ENCODE measurements at regions of chr12 and their contacts with region 1.

Region 1: DNA sequence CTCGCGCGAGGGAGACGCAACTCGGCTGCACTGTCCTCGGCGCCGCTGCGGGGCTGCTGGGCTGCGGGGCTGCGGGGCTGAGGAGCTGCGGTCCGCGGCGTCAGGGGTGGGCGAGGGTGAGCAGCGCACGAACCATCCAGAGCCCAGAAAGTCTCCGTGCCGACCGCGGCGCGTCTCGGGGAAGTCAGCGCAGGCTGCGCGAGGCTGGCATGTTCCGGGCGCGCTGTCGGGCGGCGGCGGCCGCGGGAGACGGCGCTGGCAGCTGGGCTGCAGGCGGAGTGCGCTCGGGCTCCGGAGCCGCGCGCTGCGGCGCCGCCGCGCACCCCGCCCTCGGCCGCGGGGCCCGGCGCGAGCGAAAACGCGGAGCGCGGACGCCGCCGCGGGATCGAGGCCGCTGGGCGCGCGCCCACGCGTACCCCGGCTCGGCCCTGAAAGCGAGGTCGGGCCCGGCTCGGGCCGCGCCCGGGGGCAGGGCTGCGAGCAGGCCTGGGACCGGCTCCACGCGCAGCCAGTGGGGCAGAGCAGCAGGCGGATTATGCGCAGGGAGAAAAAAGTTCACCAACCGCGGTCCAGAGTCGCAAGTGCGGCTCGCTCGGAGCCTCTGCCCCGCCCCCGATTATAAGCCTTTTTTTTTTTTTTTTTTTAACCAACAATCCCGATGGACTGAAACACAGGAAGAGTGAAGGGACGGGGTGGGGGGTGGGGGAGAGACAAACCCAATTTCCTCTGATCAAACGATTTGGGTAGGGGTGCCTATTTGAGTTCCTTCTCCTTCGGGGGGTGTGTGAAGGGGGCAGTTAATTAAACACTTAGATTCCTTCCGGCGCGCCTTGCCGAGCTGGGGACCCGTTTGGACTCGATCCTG is at the start of gene PRICKLE1:
- DNase-seq: peak; percentile 64
- H3K4me3 ChIP-seq: peak within 1 kb of the TSS; percentile 91 to 97 (median 95)
- H3K27ac ChIP-seq: peak within 1 kb of the TSS; percentile 67
- H3K4me1 ChIP-seq: peaks cover 22% of the 10 kb centered on the region
- H3K27me3 ChIP-seq: no peaks in the 10 kb centered on the region
- CTCF ChIP-seq: no peak
- total RNA-seq, gene PRICKLE1: 18.4 to 43.2 TPM

Region 2: DNA sequence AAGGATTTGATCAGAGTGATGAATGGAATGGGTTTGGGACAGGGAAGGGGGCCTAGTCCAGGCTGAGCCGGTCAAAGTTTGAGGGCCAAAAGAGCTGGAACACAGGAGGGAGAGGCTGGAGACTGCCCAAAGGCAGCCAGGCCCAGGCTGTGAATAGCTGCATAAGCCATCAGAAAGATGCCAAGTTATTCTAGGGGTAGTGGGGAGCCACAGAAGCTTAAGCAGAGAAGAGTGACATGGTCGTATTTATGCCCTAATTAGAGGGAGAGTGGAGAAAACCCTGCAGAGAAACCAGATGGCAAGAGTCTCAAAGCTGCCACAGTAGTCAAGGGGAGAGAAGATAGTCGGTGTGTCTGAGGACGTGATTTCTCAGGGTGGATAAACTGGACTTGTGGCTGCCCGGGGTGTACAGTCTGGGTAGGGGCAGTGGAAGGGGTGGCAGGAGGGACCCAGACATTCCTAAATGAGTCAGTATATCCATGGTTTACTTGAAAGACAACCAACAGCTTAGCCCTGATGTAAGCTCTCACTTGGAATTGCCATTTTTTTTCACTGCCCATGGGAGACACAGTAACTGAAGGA is 99.3 kb before region 1 on chr12:
- CTCF ChIA-PET with region 1: no interaction called
- dilution Hi-C with region 1: no loop called
- in situ Hi-C with region 1: no loop called
- intact Hi-C with region 1: no loop called
- DNase-seq: no peak
- H3K4me3 ChIP-seq: no peak overlapping the region
- H3K27ac ChIP-seq: no peak overlapping the region
- H3K4me1 ChIP-seq: no peaks in the 10 kb centered on the region
- H3K27me3 ChIP-seq: no peaks in the 10 kb centered on the region
- CTCF ChIP-seq: no peak

Region 3: GRCh38 chr12:42691991-42692557 is 102.4 kb after region 1 on chr12:
- CTCF ChIA-PET with region 1: no interaction called
- dilution Hi-C with region 1: no loop called
- in situ Hi-C with region 1: no loop called
- intact Hi-C with region 1: loop called (anchors 5 kb)
- DNase-seq: no peak
- H3K4me3 ChIP-seq: no peak overlapping the region
- H3K27ac ChIP-seq: no peak overlapping the region
- H3K4me1 ChIP-seq: peaks cover 6% of the 10 kb centered on the region
- H3K27me3 ChIP-seq: no peaks in the 10 kb centered on the region
- CTCF ChIP-seq: no peak

Region 4: DNA sequence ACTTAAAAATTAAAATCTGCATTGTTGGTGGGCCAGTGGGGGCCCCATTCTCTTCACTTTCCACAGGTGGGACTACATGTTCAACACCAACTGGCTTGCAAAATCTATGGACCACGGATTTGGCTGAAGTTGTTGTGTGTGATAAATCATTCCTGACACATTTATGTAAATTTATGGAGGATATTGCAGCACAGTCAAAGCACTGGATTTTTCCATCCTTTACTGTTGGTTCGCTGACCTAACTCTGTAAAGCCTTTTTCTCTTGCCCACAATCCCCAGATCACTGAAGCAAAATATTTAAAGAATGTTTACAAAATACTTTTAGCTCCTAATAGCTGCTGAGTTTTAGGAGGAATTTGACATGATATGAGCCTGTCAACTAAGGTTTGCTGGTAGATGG is 219.5 kb after region 1 on chr12:
- CTCF ChIA-PET with region 1: no interaction called
- dilution Hi-C with region 1: no loop called
- in situ Hi-C with region 1: no loop called
- intact Hi-C with region 1: loop called (anchors 5 kb)
- DNase-seq: no peak
- H3K4me3 ChIP-seq: no peak overlapping the region
- H3K27ac ChIP-seq: no peak overlapping the region
- H3K4me1 ChIP-seq: no peaks in the 10 kb centered on the region
- H3K27me3 ChIP-seq: no peaks in the 10 kb centered on the region
- CTCF ChIP-seq: no peak

Region 5: DNA sequence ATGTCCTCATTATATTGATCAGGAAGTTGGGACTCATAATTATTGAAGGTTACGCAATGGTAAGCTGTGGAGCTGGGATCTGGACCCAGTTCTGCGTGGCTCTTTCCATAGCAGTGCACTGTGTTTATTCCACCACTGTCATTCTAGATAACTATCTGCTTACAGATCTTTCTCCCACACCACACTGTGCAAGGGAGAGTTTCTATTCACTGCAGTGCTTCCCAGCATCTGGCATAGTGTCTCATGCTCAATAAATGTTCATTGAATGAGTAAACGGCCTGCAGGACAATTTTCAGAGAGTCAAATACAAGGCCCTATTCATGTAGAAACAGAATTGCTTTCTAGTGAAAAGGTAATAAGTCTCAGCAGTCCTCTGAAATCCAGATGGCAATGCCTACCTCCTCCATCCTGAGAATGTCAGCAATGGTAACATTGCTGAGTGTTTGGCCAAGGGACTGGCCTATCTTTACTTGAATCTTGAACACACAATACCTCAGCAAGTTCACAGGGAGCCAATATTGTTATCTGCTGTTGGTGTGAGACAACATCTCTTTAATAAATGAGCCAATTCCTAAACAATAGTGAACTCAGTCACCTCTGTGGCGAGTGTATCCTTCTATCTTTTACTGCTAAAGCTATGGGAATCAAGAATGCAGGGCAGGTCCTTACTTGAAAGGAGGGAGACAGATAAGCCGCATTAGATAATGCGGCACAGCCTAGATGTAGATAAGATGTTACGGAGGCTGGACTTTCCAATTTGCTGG is 332.2 kb after region 1 on chr12:
- CTCF ChIA-PET with region 1: no interaction called
- dilution Hi-C with region 1: no loop called
- in situ Hi-C with region 1: no loop called
- intact Hi-C with region 1: loop called (anchors 10 kb)
- DNase-seq: peak; percentile 93
- H3K4me3 ChIP-seq: no peak overlapping the region
- H3K27ac ChIP-seq: peak overlapping the region; percentile 72
- H3K4me1 ChIP-seq: peaks cover 22% of the 10 kb centered on the region
- H3K27me3 ChIP-seq: no peaks in the 10 kb centered on the region
- CTCF ChIP-seq: no peak

Region 6: DNA sequence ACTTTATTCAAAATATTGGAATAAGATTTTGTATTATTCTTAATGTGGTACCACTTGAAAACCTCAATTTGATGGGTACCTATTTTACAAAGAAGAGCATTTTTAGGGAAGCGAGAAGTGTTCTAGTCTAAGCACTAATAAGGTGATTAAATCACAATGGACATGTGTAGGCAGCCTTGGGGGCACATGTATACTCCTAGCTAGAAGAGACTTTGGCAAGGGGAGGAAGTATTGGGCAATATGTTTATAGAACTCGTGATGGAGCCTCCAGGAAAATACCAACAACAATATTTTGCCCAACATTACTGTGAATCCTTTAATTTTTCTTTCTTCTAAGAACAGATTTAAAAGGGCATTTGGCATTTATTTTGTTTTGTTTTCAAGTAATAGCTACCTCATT is 682.0 kb after region 1 on chr12:
- CTCF ChIA-PET with region 1: interaction called, 10 read pairs
- dilution Hi-C with region 1: no loop called
- in situ Hi-C with region 1: loop called in 1 of 2 experiments (anchors 10 kb)
- intact Hi-C with region 1: no loop called
- DNase-seq: no peak
- H3K4me3 ChIP-seq: no peak overlapping the region
- H3K27ac ChIP-seq: no peak overlapping the region
- H3K4me1 ChIP-seq: peaks cover 11% of the 10 kb centered on the region
- H3K27me3 ChIP-seq: no peaks in the 10 kb centered on the region
- CTCF ChIP-seq: no peak

Region 7: GRCh38 chr12:43338848-43339526 is 749.3 kb after region 1 on chr12:
- CTCF ChIA-PET with region 1: no interaction called
- dilution Hi-C with region 1: no loop called
- in situ Hi-C with region 1: no loop called
- intact Hi-C with region 1: loop called (anchors 1 kb)
- DNase-seq: peak; percentile 48
- H3K4me3 ChIP-seq: no peak overlapping the region
- H3K27ac ChIP-seq: peak overlapping the region; percentile 23
- H3K4me1 ChIP-seq: peaks cover 30% of the 10 kb centered on the region
- H3K27me3 ChIP-seq: no peaks in the 10 kb centered on the region
- CTCF ChIP-seq: peak; percentile 63 to 88

Measured in mammary epithelial cell (primary cell).